ENCODE measurements at regions of chr11 and their contacts with region 1.

Region 1: GRCh38 chr11:1757861-1758610 is 5.7 kb downstream of the CTSD start:
- DNase-seq: no peak
- H3K4me3 ChIP-seq: no peak overlapping the region
- H3K27ac ChIP-seq: no peak overlapping the region
- H3K4me1 ChIP-seq: peaks cover 18% of the 10 kb centered on the region
- H3K27me3 ChIP-seq: no peaks in the 10 kb centered on the region
- CTCF ChIP-seq: no peak
- EP300 ChIP-seq: no peak
- POLR2A ChIP-seq: no peak

Region 2: GRCh38 chr11:1773711-1774550 is 15.9 kb after region 1 on chr11:
- intact Hi-C with region 1: loop called in 1 of 4 experiments (anchors 2 kb)
- DNase-seq: no peak
- H3K4me3 ChIP-seq: no peak overlapping the region
- H3K27ac ChIP-seq: no peak overlapping the region
- H3K4me1 ChIP-seq: peaks cover 1% of the 10 kb centered on the region
- H3K27me3 ChIP-seq: no peaks in the 10 kb centered on the region
- CTCF ChIP-seq: no peak
- EP300 ChIP-seq: no peak
- POLR2A ChIP-seq: no peak

Region 3: DNA sequence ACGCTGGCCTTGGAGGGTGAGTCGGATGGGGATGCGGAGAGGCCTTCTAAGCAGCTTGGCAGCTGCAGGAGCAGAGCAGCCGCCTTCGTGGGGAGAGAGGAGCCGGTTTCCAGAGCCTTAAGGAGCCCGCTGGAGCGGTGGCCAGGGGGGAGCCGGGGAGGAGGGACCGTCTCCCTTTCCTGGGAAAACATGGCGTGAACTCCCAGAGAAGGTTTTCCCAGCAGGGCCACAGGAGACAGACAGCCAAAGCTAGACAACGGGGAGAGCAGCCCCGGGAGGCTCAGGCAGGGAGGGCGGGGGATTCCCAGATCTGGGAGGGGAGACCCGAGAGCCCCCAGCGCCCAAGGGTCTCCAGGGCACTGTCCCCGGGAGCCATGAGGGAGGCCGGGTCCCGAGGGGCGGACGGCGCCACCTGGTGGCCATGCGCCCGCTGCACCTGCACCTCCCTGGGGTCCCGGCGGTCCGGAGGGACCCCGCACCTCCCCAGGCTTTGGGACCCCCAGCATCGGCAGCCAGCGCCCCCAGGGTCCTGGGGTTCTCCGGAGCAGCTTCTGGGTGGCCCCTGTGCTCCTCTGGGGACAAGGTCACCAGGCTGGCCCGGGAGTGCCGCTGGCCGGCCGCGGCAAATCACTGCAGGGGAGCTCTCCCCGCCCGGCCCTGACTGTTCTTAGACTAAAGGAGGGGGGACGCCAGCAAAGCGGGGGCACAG is 74.3 kb after region 1 on chr11:
- intact Hi-C with region 1: no loop called
- DNase-seq: peak; percentile 33 to 75 (median 62)
- H3K4me3 ChIP-seq: no peak overlapping the region
- H3K27ac ChIP-seq: no peak overlapping the region
- H3K4me1 ChIP-seq: no peaks in the 10 kb centered on the region
- H3K27me3 ChIP-seq: no peaks in the 10 kb centered on the region
- CTCF ChIP-seq: peak; percentile 82 to 96 (median 86)
- EP300 ChIP-seq: no peak
- POLR2A ChIP-seq: no peak

Region 4: DNA sequence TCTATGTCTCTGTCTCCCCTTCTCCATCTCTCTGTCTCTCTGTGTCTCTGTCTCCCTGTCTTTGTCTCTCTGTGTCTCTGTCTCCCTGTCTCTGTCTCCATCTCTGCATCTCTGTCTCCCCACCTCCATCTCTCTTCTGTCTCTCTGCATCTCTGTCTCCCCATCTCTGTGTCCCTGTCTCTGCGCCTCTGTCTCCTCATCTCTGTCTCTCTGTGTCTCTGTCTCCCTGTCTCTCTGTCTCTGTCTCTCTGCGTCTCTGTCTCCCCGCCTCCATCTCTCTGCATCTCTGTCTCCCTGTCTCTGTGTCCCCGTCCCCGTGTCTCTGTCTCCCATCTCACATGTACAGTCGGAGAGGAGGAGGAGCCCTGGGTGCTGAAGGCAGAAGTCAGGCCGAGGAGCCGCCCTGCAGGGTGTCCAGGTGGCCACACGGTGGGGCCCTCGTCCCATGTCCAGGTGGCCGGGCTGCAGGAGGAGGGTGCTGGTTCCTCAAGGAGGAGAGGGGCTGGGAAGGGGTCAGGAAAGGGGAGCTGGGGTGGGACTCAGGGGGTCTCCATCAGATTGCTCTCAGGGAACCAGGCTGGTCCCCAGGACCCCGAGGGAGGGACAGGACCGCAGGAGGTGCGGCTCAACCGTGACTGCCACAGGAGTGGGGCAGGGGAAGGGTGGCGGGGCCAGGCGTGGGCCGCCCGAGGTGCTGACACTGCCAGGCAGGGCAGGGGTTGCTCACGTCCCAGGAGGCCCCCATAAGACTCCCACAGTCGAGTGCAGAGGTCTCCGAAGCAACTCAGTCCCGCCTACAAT is 439.1 kb after region 1 on chr11:
- intact Hi-C with region 1: no loop called
- DNase-seq: peak; percentile 61 to 85 (median 75)
- H3K4me3 ChIP-seq: no peak overlapping the region
- H3K27ac ChIP-seq: no peak overlapping the region
- H3K4me1 ChIP-seq: no peaks in the 10 kb centered on the region
- H3K27me3 ChIP-seq: no peaks in the 10 kb centered on the region
- CTCF ChIP-seq: peak; percentile 33 to 75 (median 75)
- EP300 ChIP-seq: no peak
- POLR2A ChIP-seq: no peak

Measured in ovary (tissue), 10 donors.